ENCODE measurements at regions of chr10 and their contacts with region 1.

Region 1: GRCh38 chr10:75226656-75227055 is 9.1 kb downstream of the COMTD1 start:
- DNase-seq: no peak
- H3K4me3 Mint-ChIP-seq: no peak overlapping the region
- H3K27ac Mint-ChIP-seq: peak overlapping the region; percentile 47
- H3K4me1 Mint-ChIP-seq: peaks cover 85% of the 10 kb centered on the region
- H3K27me3 Mint-ChIP-seq: no peaks in the 10 kb centered on the region
- CTCF ChIP-seq: no peak

Region 2: GRCh38 chr10:75210282-75211006 is 16.2 kb before region 1 on chr10 and contains the start of gene VDAC2:
- CTCF ChIA-PET with region 1: interaction called, 13 read pairs
- intact Hi-C with region 1: loop called (anchors 2 kb)
- DNase-seq: peak; percentile 96
- H3K4me3 Mint-ChIP-seq: peak within 1 kb of the TSS; percentile 83
- H3K27ac Mint-ChIP-seq: peak within 1 kb of the TSS; percentile 93
- H3K4me1 Mint-ChIP-seq: no peaks in the 10 kb centered on the region
- H3K27me3 Mint-ChIP-seq: no peaks in the 10 kb centered on the region
- CTCF ChIP-seq: no peak
- total RNA-seq, gene VDAC2: 243 and 254 TPM in 2 replicates